Mammary epithelial cell (primary cell): ENCODE measurements at regions of chr12 and their contacts with region 1.

Region 1: DNA sequence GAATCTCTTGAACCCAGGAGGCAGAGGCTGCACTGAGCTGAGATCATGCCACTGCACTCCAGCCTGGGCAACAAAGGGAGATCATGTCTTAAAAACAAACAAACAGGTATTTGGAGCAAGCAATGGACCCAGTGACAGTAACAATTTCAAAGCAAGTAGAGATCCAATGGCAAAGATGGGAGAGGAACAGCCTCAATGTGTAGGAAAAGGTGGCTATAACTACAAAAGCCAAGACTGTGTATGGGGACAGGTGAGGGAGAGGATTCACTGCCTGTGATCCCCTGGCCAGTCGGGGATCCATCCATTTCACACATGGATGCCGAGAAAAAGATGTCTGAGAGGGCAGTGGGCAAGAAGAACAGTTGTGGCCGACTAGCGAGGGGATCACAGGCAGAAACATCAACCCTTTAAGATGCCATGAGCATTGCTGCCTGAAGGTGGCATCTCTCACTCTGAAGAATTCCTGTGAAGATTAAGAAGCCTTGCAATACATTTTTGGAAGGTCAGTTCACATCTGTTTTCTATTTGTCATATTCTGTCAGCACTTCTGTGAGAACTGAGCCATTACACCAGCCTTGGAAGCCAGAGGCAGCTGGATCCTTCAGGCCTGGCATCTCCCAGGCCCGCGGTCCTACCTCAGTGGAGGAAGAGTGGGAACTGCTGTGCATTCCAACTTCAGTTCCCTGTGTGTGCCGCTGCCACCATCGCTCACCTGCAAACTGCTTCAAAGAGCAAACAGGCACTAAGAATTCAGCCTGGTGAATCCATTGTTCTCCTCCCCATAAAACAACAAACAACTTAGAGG is 54.5 kb upstream of the FRS2 start:
- DNase-seq: peak; percentile 57
- H3K4me3 ChIP-seq: no peak overlapping the region
- H3K27ac ChIP-seq: no peak overlapping the region
- H3K4me1 ChIP-seq: peaks cover 7% of the 10 kb centered on the region
- H3K27me3 ChIP-seq: no peaks in the 10 kb centered on the region
- CTCF ChIP-seq: peak; percentile 89 to 92

Region 2: GRCh38 chr12:69309461-69309860 is 106.2 kb before region 1 on chr12:
- CTCF ChIA-PET with region 1: no interaction called
- dilution Hi-C with region 1: no loop called
- in situ Hi-C with region 1: no loop called
- intact Hi-C with region 1: no loop called
- DNase-seq: no peak
- H3K4me3 ChIP-seq: no peak overlapping the region
- H3K27ac ChIP-seq: no peak overlapping the region
- H3K4me1 ChIP-seq: no peaks in the 10 kb centered on the region
- H3K27me3 ChIP-seq: no peaks in the 10 kb centered on the region
- CTCF ChIP-seq: no peak

Region 3: GRCh38 chr12:69354556-69355187 is 61.0 kb before region 1 on chr12:
- CTCF ChIA-PET with region 1: no interaction called
- dilution Hi-C with region 1: no loop called
- in situ Hi-C with region 1: no loop called
- intact Hi-C with region 1: loop called (anchors 2 kb)
- DNase-seq: no peak
- H3K4me3 ChIP-seq: no peak overlapping the region
- H3K27ac ChIP-seq: no peak overlapping the region
- H3K4me1 ChIP-seq: peaks cover 8% of the 10 kb centered on the region
- H3K27me3 ChIP-seq: no peaks in the 10 kb centered on the region
- CTCF ChIP-seq: no peak

Region 4: GRCh38 chr12:69484428-69484827 is 68.8 kb after region 1 on chr12:
- CTCF ChIA-PET with region 1: interaction called, 10 read pairs
- dilution Hi-C with region 1: no loop called
- in situ Hi-C with region 1: no loop called
- intact Hi-C with region 1: no loop called
- DNase-seq: no peak
- H3K4me3 ChIP-seq: no peak overlapping the region
- H3K27ac ChIP-seq: no peak overlapping the region
- H3K4me1 ChIP-seq: no peaks in the 10 kb centered on the region
- H3K27me3 ChIP-seq: no peaks in the 10 kb centered on the region
- CTCF ChIP-seq: peak in 1 of 2 donors; percentile 16